Cardiac septum (tissue), 1 donor: ENCODE measurements at regions of chr5 and their contacts with region 1.

Region 1: DNA sequence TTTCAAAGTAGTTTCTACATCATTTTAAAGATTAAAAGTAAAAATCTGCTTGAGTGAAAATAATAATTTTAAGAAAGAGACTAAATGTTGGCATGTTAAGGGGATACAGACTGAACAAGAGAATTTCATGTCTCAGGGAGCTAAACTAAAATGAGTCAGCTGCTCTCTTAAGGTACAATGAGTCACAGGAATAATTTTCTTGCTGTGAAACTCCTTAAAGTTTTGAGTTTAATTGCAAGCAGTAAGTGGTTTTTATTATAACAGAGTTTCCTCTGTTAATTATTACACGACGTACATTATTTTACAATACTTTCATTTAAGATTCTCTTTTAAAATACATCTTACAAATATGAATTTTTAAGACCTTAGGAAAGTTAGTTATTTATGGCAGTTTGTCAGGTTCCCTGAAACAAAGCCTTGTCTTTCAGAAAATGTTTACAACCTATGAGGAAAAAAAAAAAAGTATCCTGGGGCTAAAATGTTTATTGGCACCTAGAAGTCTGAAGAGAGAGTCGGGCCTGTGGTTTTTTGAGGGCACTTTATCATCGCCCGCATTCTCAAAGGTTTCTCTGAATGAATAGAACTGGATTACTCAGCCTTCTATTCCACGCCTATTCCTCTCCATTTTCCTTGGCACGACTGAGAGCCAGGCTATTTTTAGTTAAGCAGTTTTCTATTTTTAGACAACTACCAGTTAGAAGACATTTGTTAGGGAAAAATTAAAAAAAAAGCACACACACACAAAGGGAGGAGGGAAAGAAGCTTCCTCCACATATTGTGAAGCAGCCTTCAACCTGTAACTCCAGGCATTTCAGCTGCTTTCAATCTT is 97.4 kb downstream of the MEF2C start:
- DNase-seq: no peak

Region 2: GRCh38 chr5:88826646-88827585 is 41.3 kb after region 1 on chr5:
- intact Hi-C with region 1: loop called (anchors 2 kb)
- DNase-seq: peak; percentile 83

Region 3: GRCh38 chr5:88883059-88883835 is 97.6 kb after region 1 on chr5 and contains the start of gene MEF2C:
- intact Hi-C with region 1: loop called (anchors 2 kb)
- DNase-seq: peak; percentile 87
- total RNA-seq, gene MEF2C: 64.6 TPM